WTC11 (cell line): ENCODE measurements at regions of chr20 and their contacts with region 1.

Region 1: GRCh38 chr20:45362804-45363610 is at the start of gene SYS1:
- DNase-seq: peak; percentile 99
- ATAC-seq: peak; percentile 89
- H3K4me3 Mint-ChIP-seq: peak within 1 kb of the TSS; percentile 97
- H3K27ac Mint-ChIP-seq: peak within 1 kb of the TSS; percentile 98
- H3K4me1 Mint-ChIP-seq: peaks cover 25% of the 10 kb centered on the region
- H3K27me3 Mint-ChIP-seq: no peaks in the 10 kb centered on the region
- CTCF ChIP-seq: peak; percentile 77
- total RNA-seq, gene SYS1: 15.4 to 20.1 TPM (median 16.4 TPM) in 3 replicates

Region 2: DNA sequence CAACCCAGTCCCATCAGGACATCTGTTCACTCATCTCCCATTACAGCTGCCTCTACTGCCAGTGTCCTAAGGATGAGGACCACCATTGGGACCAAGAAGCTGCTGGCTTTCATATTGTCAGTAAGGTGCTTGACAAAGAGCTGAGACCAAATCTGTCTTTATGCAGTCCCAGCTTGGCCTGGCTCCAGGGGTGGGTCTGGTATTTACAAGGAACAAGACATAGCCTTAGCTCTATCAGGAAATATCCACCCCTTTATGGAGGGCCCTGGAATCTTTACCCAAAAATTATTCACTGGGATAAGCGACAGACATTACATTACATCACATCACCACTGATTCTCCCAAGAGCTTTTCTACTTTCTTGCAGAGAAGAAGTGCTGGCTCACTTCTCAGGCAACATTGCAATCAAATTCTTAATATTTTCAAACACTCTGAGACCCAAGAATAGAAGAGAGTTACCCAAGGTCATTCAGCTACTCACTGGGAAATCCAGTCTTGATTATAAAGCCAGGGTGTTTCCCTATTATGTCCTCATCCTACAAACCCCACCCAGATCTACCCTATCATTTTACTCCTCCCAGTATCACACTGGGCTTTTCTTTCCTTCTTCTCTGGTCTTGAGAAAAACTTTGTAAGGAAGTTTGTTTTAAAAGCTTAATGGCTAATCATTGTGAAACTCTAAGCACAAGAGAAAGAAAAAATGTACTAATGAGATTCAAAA is 199.8 kb before region 1 on chr20:
- CTCF ChIA-PET with region 1: no interaction called
- POLR2A ChIA-PET with region 1: no interaction called
- DNase-seq: no peak
- ATAC-seq: no peak
- H3K4me3 Mint-ChIP-seq: no peak overlapping the region
- H3K27ac Mint-ChIP-seq: no peak overlapping the region
- H3K4me1 Mint-ChIP-seq: no peaks in the 10 kb centered on the region
- H3K27me3 Mint-ChIP-seq: peaks cover 46% of the 10 kb centered on the region
- CTCF ChIP-seq: no peak

Region 3: GRCh38 chr20:45322952-45323383 is 40.0 kb before region 1 on chr20:
- CTCF ChIA-PET with region 1: interaction called, 31 read pairs
- POLR2A ChIA-PET with region 1: no interaction called
- DNase-seq: no peak
- ATAC-seq: peak; percentile 49
- H3K4me3 Mint-ChIP-seq: no peak overlapping the region
- H3K27ac Mint-ChIP-seq: no peak overlapping the region
- H3K4me1 Mint-ChIP-seq: peaks cover 2% of the 10 kb centered on the region; the same call in 1 of the 2 replicates
- H3K27me3 Mint-ChIP-seq: no peaks in the 10 kb centered on the region
- CTCF ChIP-seq: no peak

Region 4: DNA sequence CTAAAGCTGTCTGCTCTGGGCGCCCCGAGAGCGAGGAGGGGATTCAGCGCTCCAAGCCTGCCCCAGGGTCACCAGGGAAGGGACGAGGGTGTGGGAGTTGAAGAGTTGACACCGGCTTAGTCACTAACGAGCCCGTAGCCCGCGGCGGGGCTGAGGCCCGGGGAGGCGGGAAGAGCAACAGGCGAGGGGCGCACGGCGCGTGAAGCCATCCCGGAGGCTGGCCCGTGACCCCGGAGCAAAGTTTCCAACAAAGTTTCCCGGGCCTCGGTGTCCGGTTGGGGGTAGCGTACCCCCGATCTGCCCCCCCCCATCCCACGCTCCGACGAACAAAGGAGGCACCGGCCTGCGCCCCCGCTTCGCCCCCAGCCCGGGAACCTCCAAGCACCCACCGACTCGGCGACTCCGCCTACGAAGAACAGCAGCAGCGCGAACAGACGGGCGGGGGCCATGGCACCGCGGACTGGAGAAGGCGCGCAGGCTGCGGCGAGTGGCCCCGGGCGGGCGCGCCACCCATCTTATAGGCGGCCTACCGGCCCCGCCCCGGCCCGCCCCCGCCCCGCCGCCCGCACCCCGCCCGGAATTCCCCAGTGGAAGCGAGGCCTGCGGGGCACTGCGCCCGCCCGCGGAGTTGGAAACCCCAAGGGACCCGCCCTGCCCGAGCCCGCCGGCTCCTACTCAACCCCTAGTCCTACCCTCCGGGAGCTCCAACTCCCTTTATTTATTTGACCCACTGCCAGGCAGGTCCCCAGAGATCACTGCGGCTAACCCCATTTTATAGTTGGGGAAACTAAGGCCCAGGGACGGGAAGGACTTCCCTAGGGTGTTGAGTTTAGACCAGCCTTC is 14.8 kb before region 1 on chr20 and contains the start of gene SDC4:
- CTCF ChIA-PET with region 1: interaction called, 16 read pairs
- POLR2A ChIA-PET with region 1: interaction called, 11 read pairs
- DNase-seq: peak; percentile 68
- ATAC-seq: peak; percentile 63
- H3K4me3 Mint-ChIP-seq: peak within 1 kb of the TSS; percentile 89
- H3K27ac Mint-ChIP-seq: peak within 1 kb of the TSS; percentile 19
- H3K4me1 Mint-ChIP-seq: peaks cover 45% of the 10 kb centered on the region
- H3K27me3 Mint-ChIP-seq: no peaks in the 10 kb centered on the region
- CTCF ChIP-seq: no peak
- total RNA-seq, gene SDC4: 64.0 to 69.6 TPM (median 69.5 TPM) in 3 replicates

Region 5: DNA sequence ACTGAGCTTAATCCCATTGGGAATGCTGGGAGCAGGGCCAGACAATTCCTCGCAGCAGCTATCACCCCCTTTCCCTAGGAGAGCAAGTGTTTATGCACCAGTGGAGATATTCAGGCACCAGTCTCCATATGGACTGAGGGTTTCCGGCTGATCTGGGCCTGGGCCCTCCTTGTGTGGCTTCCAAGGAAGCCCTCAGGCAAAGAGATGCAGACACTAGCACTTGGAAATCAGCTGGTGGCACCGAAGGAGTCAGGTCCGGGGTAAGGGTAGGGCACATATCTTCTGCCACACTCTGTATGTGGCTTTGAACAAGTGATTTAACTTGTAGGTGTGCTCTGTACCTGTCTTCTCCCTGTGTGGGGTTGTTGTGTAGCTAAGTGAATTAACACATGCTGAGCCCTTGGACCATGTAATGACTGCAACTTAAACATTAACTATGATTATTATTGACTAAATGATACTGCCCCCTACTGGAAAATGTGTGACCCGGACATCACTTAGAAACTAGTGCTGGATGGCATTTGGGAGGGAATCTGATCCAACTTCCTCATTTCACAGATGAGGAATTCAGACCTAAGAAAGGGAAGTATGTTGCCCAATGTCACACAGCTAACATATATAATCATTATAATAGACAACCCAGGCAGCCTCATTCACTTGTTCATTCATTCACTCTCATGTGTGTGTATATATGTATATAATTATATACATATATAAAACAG is 87.3 kb after region 1 on chr20:
- CTCF ChIA-PET with region 1: interaction called, 18 read pairs
- POLR2A ChIA-PET with region 1: no interaction called
- DNase-seq: no peak
- ATAC-seq: peak; percentile 59
- H3K4me3 Mint-ChIP-seq: no peak overlapping the region
- H3K27ac Mint-ChIP-seq: no peak overlapping the region
- H3K4me1 Mint-ChIP-seq: peaks cover 3% of the 10 kb centered on the region; the same call in 1 of the 2 replicates
- H3K27me3 Mint-ChIP-seq: peaks cover 3% of the 10 kb centered on the region; the same call in 1 of the 2 replicates
- CTCF ChIP-seq: peak; percentile 70